ENCODE measurements at regions of chr1 and their contacts with region 1.

Region 1: DNA sequence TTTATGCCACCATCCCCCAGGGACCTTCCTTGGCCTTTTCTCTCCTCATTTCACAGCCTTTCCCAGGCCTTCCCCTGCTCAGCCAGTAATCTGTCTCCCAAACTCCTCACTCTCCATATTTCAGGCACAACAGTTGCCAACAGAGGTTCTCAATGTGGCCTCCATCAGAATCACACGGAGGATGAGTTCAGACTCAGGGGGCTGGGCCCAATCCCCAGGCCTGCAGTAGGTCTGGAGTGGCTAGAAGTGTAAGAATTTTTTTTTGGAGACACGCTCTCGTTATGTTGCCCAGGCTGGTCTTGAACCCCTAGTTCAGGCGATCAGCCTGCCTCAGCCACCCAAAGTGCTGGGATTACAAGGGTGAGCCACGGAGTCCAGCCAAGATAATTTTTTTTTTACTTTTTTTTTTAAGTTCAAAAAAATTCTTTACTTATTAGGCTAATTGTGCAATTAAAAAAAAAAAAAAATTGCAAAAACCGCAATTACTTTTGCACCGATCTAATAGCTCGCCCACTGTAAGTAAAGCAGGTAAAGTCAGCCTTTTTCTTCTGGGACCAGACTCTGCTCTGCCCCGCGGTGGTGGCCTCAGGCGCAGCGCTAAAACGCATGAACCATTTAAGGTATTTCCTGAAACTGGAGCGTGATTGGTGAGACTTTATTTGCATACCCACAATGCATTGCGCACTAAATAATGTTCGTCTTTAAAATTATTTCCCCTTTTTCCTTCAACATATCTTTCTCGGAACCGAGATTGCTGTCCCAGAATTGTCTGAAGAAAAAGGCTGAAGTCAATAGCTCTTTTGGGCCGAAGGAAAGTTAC is 18.7 kb downstream of the KIAA2013 start:
- DNase-seq: peak; percentile 86 to 98 (median 90)
- ATAC-seq: peak; percentile 72
- H3K4me3 ChIP-seq: no peak overlapping the region
- H3K27ac ChIP-seq: peak overlapping the region; percentile 100
- H3K4me1 ChIP-seq: peaks cover 15 to 27% of the 10 kb centered on the region in 2 experiments
- H3K27me3 ChIP-seq: no peaks in the 10 kb centered on the region
- CTCF ChIP-seq: peak; percentile 87 to 98 (median 96)
- EP300 ChIP-seq: no peak
- POLR2A ChIP-seq: no peak
- RAD21 ChIP-seq: peak; percentile 61 to 78

Region 2: DNA sequence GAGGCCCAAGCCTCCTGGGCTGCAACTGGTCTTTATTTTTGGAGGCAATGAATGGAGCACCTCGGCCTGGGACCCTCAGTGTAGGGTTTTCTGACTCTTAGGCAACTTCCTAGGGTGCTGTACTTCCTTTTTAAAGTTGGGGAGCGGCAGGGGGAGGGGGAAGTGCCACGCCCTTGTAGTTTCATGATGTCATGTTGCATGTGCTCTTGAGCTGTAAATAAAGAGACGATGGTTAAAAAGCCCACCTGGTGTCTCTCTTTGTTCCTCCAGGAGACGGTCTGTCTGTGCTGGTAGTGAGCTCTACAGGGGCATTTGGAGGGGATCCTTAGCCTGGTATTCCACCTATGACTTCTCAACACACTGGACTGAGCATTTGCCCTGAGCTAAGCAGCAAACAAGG is 181.9 kb before region 1 on chr1:
- CTCF ChIA-PET with region 1: no interaction called
- POLR2A ChIA-PET with region 1: interaction called, 12 read pairs
- in situ Hi-C with region 1: no loop called
- intact Hi-C with region 1: no loop called
- DNase-seq: no peak
- ATAC-seq: peak; percentile 29
- H3K4me3 ChIP-seq: no peak overlapping the region
- H3K27ac ChIP-seq: no peak overlapping the region
- H3K4me1 ChIP-seq: peaks cover 25 to 33% of the 10 kb centered on the region in 2 experiments
- H3K27me3 ChIP-seq: no peaks in the 10 kb centered on the region
- CTCF ChIP-seq: no peak
- EP300 ChIP-seq: no peak
- POLR2A ChIP-seq: no peak
- RAD21 ChIP-seq: no peak

Region 3: DNA sequence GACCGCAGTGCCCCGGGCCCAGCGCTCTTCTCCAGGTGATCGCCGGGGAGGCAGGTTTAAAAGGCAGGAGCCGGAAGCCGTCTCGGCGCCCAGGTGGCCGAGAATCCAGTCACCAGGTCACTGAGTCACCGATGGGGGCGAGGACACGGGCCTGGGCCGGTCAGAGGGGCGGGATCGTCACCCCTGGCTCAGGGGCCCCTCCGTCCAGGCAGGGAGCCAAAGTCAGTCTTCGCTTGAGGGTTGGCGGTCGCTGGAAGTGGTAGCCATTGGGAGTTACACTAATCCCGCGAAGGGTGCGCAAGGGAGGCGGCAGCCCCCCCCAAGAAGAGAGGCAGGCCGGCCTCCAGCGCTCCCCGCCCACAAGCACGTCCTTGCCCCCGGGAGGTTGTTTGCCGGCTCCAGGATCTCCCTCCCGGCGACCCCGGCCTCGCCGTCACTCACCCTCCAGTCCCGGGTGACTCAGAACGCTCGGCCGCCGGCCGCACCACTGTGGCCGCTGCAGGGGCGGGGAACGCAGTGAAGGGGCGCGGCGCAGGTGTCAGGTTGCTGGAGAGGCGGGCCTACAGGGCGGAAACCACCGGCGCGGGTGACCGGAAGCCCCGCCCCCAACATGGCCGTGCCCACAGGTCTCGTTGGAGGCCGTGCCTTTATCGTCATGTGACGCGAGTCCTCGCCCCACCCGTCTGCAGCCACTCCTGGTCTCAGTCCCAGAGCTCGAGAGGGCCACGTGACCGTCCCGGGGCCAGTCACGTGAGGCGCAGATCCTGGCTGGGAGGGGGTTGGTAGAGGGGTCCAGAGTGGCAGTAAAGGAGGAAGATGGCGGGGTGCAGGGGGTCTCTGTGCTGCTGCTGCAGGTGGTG is 101.8 kb before region 1 on chr1 and contains the starts of genes CLCN6 and MTHFR:
- CTCF ChIA-PET with region 1: no interaction called
- POLR2A ChIA-PET with region 1: interaction called, 104 read pairs
- in situ Hi-C with region 1: no loop called
- intact Hi-C with region 1: loop called (anchors 2 kb)
- DNase-seq: peak; percentile 97 to 100 (median 98)
- ATAC-seq: peak; percentile 84
- H3K4me3 ChIP-seq: peak within 1 kb of the TSS; percentile 81
- H3K27ac ChIP-seq: peak within 1 kb of the TSS; percentile 98
- H3K4me1 ChIP-seq: peaks cover 34 to 40% of the 10 kb centered on the region in 2 experiments
- H3K27me3 ChIP-seq: no peaks in the 10 kb centered on the region
- CTCF ChIP-seq: peak in 1 of 3 experiments; percentile 5; a peak in 1 of 6 replicates
- EP300 ChIP-seq: peak; percentile 79
- POLR2A ChIP-seq: peak; percentile 94
- RAD21 ChIP-seq: peak; percentile 5 to 14; a peak in 2 of 4 replicates
- polyA plus RNA-seq, gene CLCN6: 2.0 to 3.1 TPM
- polyA plus RNA-seq, gene MTHFR: 5.0 to 5.4 TPM

Region 4: GRCh38 chr1:11874258-11874562 is 33.3 kb before region 1 on chr1:
- CTCF ChIA-PET with region 1: no interaction called
- POLR2A ChIA-PET with region 1: interaction called, 159 read pairs
- in situ Hi-C with region 1: no loop called
- intact Hi-C with region 1: no loop called
- DNase-seq: no peak
- ATAC-seq: no peak
- H3K4me3 ChIP-seq: no peak overlapping the region
- H3K27ac ChIP-seq: no peak overlapping the region
- H3K4me1 ChIP-seq: peaks cover 8 to 41% of the 10 kb centered on the region in 2 experiments
- H3K27me3 ChIP-seq: peaks cover 0 to 5% of the 10 kb centered on the region in 2 experiments; a peak in 2 of 5 replicates
- CTCF ChIP-seq: no peak
- EP300 ChIP-seq: no peak
- POLR2A ChIP-seq: no peak
- RAD21 ChIP-seq: no peak

Region 5: DNA sequence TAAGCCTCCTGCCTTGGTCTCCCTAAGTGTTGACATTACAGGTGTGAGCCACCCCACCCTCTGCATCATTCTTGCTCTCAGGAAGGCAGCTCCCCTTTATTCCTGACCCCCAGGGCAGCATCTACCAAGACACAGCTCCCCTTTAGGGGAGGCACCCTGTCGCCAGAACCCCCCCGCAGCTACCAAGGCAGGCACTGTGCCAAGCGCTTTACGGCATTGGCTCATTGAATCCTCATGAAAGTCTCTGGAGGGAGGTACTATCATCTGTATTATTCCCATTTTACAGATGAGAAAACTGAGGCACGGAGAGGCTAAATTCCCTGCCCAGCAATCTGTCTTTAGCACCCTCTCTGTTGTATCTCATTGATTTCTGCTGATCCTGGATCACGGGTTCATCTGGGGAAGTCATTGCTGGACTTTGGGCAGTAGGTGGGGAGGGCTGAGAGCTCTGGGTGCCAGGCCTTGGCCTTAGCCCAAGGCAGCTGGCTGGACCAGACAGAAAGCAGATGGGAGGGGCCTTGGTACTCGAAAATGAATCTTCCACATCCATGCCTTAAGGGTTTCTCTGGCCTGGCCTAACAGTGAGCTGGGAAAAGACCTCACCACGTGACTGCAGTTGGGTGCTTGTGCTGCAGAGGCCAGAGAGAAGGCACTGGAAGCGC is 32.9 kb after region 1 on chr1:
- CTCF ChIA-PET with region 1: no interaction called
- POLR2A ChIA-PET with region 1: interaction called, 129 read pairs
- in situ Hi-C with region 1: no loop called
- intact Hi-C with region 1: no loop called
- DNase-seq: no peak
- ATAC-seq: no peak
- H3K4me3 ChIP-seq: no peak overlapping the region
- H3K27ac ChIP-seq: no peak overlapping the region
- H3K4me1 ChIP-seq: peaks cover 15 to 38% of the 10 kb centered on the region in 2 experiments; a peak in 4 of 5 replicates
- H3K27me3 ChIP-seq: no peaks in the 10 kb centered on the region; a peak in 1 of 5 replicates
- CTCF ChIP-seq: no peak
- EP300 ChIP-seq: no peak
- POLR2A ChIP-seq: no peak
- RAD21 ChIP-seq: no peak

Region 6: DNA sequence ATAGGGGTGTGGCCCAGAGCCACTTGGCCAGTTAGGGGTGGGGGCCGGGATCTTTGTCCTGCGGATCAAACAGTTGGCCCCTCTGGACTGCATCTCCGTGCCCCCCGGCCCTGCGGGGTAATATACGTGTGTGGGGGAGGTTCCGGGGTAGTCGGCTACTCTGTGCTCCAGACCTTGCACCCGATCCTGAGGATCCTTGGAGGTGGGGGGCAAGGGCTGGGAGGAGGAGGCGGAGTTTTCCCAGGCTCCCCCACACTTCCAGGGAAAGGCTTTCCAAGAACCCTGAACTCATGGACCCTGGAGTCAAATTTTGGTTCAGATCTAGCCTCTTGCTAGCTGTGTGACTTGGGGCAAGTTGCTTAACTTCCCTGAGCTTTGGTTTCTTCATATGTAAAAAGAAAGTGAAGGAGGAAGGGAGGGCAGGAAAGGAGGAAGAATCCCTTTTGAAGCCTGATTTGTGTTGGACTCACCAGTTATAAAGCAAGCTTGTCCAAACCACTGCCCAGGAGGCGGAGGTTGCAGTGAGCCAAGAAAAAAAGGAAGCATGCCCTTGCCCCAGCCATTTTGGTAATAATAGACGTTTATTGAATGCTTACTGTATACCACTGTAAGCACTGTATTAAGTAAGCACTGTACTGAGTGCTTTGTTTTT is 112.5 kb after region 1 on chr1:
- CTCF ChIA-PET with region 1: no interaction called
- POLR2A ChIA-PET with region 1: interaction called, 60 read pairs
- in situ Hi-C with region 1: no loop called
- intact Hi-C with region 1: loop called (anchors 5 kb)
- DNase-seq: peak in 3 of 4 experiments; percentile 54 to 73 (median 69)
- ATAC-seq: peak; percentile 11; the same call in 2 of the 3 replicates
- H3K4me3 ChIP-seq: peak overlapping the region; percentile 69
- H3K27ac ChIP-seq: peak overlapping the region; percentile 75
- H3K4me1 ChIP-seq: peaks cover 14 to 46% of the 10 kb centered on the region in 2 experiments
- H3K27me3 ChIP-seq: no peaks in the 10 kb centered on the region
- CTCF ChIP-seq: no peak
- EP300 ChIP-seq: no peak
- POLR2A ChIP-seq: no peak
- RAD21 ChIP-seq: no peak

Region 7: GRCh38 chr1:12215118-12215961 is 307.9 kb after region 1 on chr1:
- CTCF ChIA-PET with region 1: no interaction called
- POLR2A ChIA-PET with region 1: interaction called, 14 read pairs
- in situ Hi-C with region 1: no loop called
- intact Hi-C with region 1: no loop called
- DNase-seq: peak in 1 of 4 experiments; percentile 38
- ATAC-seq: no peak
- H3K4me3 ChIP-seq: no peak overlapping the region
- H3K27ac ChIP-seq: no peak overlapping the region
- H3K4me1 ChIP-seq: peaks cover 20 to 23% of the 10 kb centered on the region in 2 experiments; a peak in 4 of 5 replicates
- H3K27me3 ChIP-seq: no peaks in the 10 kb centered on the region
- CTCF ChIP-seq: no peak
- EP300 ChIP-seq: no peak
- POLR2A ChIP-seq: no peak
- RAD21 ChIP-seq: no peak

Region 8: GRCh38 chr1:13469343-13469742 is 1561.9 kb after region 1 on chr1:
- CTCF ChIA-PET with region 1: no interaction called
- POLR2A ChIA-PET with region 1: no interaction called
- in situ Hi-C with region 1: no loop called
- intact Hi-C with region 1: no loop called
- DNase-seq: peak; percentile 19 to 34 (median 22)
- ATAC-seq: peak; percentile 71
- H3K4me3 ChIP-seq: no peak overlapping the region
- H3K27ac ChIP-seq: no peak overlapping the region
- H3K4me1 ChIP-seq: no peaks in the 10 kb centered on the region
- H3K27me3 ChIP-seq: peaks cover 0 to 19% of the 10 kb centered on the region in 2 experiments; a peak in 1 of 5 replicates
- CTCF ChIP-seq: peak; percentile 23 to 39 (median 28); a peak in 3 of 6 replicates
- EP300 ChIP-seq: no peak
- POLR2A ChIP-seq: no peak
- RAD21 ChIP-seq: peak in 1 of 2 experiments; percentile 24; a peak in 1 of 4 replicates